ENCODE measurements at regions of chr5 and their contacts with region 1.

Region 1: GRCh38 chr5:78677777-78678668 is 29.5 kb upstream of the LHFPL2 start:
- DNase-seq: peak; percentile 77
- H3K4me3 Mint-ChIP-seq: no peak overlapping the region
- H3K27ac Mint-ChIP-seq: peak overlapping the region; percentile 85
- H3K4me1 Mint-ChIP-seq: peaks cover 25% of the 10 kb centered on the region
- H3K27me3 Mint-ChIP-seq: no peaks in the 10 kb centered on the region
- CTCF ChIP-seq: no peak

Region 2: DNA sequence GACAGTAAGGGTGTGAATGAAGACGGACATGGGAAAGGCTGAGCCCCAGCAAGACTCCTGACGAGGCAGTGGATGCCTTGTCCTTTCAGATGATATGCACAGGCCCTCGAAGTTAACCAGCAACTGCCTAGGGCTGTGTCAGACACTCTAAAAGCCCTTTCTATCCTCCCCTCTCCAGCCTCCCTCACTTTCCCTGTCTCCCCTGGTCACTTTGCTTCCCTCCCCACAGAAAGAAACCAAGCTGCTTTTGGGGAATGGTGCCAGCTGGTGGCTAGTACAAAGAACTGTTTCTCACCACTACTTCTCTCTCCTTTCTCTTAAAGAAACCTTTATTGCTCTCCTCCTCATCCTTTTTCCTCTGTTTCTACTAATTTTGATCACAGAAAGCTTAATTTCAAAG is 50.8 kb before region 1 on chr5:
- CTCF ChIA-PET with region 1: no interaction called
- POLR2A ChIA-PET with region 1: no interaction called
- intact Hi-C with region 1: no loop called
- DNase-seq: peak; percentile 29
- H3K4me3 Mint-ChIP-seq: no peak overlapping the region
- H3K27ac Mint-ChIP-seq: no peak overlapping the region
- H3K4me1 Mint-ChIP-seq: peaks cover 19% of the 10 kb centered on the region
- H3K27me3 Mint-ChIP-seq: no peaks in the 10 kb centered on the region
- CTCF ChIP-seq: peak; percentile 17

Region 3: DNA sequence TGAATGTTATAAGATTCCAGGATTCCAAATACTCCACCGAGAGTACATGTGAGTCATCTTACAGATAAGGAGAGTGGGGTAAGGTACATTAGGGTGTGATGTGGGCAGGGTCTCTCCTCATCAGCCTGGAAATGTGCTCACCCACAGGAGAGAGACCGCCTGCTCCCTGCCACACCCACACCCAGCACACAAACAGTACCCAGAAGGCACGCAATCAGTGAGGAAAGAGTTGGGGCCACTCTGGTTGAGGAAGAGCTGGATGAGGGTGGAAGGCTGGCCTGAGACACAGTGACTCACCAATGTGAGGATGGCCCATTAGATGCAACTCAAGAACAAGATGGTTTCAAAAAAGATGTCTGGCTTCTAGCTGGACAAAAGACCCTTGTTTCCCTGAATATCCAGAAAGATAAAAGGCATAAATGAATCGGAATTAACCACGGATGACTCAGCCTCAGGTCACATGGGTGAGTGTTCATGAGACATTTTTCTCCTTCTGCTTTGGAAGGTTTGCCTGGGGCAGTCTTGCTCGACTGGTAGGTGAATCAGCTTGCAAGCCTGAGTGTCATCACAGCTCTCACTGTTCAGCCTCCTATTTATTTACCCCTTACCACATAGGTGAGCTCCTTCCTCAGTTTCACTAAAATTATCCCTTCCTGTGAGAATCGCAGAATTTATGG is 21.7 kb after region 1 on chr5:
- CTCF ChIA-PET with region 1: interaction called, 3 read pairs
- POLR2A ChIA-PET with region 1: interaction called, 46 read pairs
- intact Hi-C with region 1: loop called (anchors 1 kb)
- DNase-seq: peak; percentile 99
- H3K4me3 Mint-ChIP-seq: peak overlapping the region; percentile 75
- H3K27ac Mint-ChIP-seq: peak overlapping the region; percentile 98
- H3K4me1 Mint-ChIP-seq: peaks cover 38% of the 10 kb centered on the region
- H3K27me3 Mint-ChIP-seq: no peaks in the 10 kb centered on the region
- CTCF ChIP-seq: no peak

Measured in MCF 10A (cell line).